Ascending aorta (tissue), 2 donors: ENCODE measurements at regions of chr2 and their contacts with region 1.

Region 1: GRCh38 chr2:156435715-156436496 is at the start of gene GPD2:
- DNase-seq: peak; percentile 43 to 95
- H3K4me3 ChIP-seq: peak within 1 kb of the TSS; percentile 67 to 86
- H3K27ac ChIP-seq: peak within 1 kb of the TSS; percentile 99 to 100
- H3K4me1 ChIP-seq: peaks cover 9 to 21% of the 10 kb centered on the region in 2 donors
- H3K27me3 ChIP-seq: no peaks in the 10 kb centered on the region
- CTCF ChIP-seq: peak in 2 of 3 experiments; percentile 6 to 12
- total RNA-seq, gene GPD2: 20.0 TPM

Region 2: DNA sequence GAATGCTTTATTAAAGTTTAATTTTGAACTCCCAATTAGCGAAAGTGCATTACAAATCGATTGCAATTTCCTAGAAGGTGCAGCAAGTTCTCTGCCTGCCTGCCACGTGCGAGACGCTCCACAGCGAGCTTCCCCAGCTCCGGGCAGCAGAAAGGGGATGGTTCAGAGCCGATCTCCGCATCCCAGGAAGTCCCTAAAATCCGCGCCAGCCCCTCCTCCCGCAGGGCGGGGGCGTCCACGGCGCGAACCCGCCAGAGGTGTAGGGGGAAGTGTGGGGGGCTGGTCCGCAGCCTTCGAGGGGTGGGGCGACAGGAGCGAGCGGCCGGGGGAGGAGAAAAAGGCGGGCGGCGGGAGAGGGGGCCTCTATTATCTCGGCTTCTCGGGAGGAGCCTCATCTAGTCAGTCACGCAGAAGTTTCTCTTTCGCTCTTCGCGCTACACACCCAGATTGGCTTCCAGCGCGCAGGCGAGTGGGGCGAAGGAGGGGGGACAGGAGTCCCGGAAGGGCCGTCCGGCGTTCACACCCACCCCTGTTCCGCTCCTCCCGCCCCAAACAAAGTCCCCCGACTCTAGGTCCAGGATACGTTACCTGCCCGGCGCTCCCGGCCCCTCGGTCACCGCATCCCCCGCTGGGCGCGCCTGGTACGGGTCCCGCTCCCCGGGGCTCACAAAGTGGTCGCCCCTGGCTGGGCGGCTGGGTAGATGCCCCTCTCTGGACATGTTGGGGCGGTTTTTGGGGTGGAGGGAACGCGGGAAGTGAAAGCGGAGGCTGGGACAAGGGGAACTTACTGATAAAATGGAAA is 94.3 kb before region 1 on chr2:
- intact Hi-C with region 1: no loop called
- DNase-seq: peak; percentile 76 to 96
- H3K4me3 ChIP-seq: peak overlapping the region; percentile 94 to 97
- H3K27ac ChIP-seq: peak overlapping the region; percentile 100
- H3K4me1 ChIP-seq: peaks cover 0 to 11% of the 10 kb centered on the region in 2 donors
- H3K27me3 ChIP-seq: no peaks in the 10 kb centered on the region
- CTCF ChIP-seq: no peak

Region 3: DNA sequence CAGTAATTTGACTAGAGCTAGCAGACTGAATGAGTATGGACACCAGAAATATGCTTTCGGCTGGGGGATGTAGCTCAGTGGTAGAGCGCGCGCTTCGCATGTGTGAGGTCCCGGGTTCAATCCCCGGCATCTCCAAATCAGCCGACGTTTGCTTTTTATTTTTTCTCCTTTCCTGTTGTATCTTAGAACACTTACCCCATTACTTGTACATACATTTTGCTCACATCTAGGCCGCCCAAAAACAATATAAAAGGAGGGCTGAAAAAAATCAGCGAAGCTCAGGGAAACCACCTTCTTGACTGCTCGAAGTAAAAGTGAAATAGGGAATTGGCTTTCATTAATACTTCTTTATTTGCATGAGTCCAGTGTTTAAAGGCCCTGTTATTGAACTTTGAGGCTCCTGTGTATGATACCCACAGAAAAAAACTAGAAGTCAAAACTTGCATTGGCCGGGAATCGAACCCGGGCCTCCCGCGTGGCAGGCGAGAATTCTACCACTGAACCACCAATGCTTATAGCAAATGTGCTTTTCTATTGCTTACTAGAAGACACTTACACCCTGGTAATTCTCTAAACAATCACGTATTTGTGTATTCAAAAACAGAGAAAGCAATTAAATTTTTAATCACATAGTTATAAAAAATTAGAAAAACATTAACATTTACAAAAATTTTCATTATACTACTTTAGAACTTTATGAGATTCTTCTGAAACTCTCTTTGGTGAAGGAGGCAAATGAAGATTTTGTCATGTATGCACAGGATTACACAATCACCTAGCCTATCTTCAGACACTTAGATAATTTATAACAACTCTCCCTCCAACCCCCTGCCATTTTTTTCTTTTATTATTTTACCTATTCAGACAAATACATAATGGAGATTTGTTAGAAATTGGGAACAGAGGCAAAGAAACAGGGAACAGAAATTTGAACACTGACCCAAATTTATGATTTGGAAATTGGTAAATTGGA is 34.9 kb before region 1 on chr2:
- intact Hi-C with region 1: loop called (anchors 1 kb)
- DNase-seq: peak in 1 of 2 donors; percentile 88
- H3K4me3 ChIP-seq: peak overlapping the region; percentile 56 to 96
- H3K27ac ChIP-seq: peak overlapping the region; percentile 87 to 99
- H3K4me1 ChIP-seq: peaks cover 0 to 4% of the 10 kb centered on the region in 2 donors
- H3K27me3 ChIP-seq: no peaks in the 10 kb centered on the region
- CTCF ChIP-seq: no peak

Region 4: DNA sequence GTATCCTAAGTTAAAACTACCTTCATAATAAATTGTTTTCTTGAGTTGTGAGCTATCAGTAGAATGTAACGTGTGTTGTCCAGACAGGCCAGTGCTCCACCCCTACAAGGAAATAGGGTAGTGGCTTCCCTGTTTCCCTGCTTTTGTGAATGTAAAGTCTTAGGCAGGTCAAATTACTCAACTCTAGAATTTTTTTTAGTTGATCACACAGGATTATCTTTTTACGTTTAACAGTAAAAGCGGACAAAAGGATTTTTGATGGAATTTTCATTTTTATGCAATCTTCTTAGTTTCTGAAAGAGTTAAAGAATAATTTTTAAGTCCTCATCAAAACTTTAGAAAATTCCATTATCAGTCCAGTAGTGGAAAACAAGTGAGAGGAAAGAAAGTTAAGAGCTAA is 38.5 kb after region 1 on chr2:
- intact Hi-C with region 1: no loop called
- DNase-seq: no peak
- H3K4me3 ChIP-seq: no peak overlapping the region
- H3K27ac ChIP-seq: no peak overlapping the region
- H3K4me1 ChIP-seq: peaks cover 0 to 5% of the 10 kb centered on the region in 2 donors
- H3K27me3 ChIP-seq: no peaks in the 10 kb centered on the region
- CTCF ChIP-seq: no peak

Region 5: GRCh38 chr2:156486147-156486546 is 50.2 kb after region 1 on chr2:
- intact Hi-C with region 1: no loop called
- DNase-seq: no peak
- H3K4me3 ChIP-seq: no peak overlapping the region
- H3K27ac ChIP-seq: no peak overlapping the region
- H3K4me1 ChIP-seq: no peaks in the 10 kb centered on the region
- H3K27me3 ChIP-seq: no peaks in the 10 kb centered on the region
- CTCF ChIP-seq: no peak